PC-3 (cell line): ENCODE measurements at regions of chr6 and their contacts with region 1.

Region 1: DNA sequence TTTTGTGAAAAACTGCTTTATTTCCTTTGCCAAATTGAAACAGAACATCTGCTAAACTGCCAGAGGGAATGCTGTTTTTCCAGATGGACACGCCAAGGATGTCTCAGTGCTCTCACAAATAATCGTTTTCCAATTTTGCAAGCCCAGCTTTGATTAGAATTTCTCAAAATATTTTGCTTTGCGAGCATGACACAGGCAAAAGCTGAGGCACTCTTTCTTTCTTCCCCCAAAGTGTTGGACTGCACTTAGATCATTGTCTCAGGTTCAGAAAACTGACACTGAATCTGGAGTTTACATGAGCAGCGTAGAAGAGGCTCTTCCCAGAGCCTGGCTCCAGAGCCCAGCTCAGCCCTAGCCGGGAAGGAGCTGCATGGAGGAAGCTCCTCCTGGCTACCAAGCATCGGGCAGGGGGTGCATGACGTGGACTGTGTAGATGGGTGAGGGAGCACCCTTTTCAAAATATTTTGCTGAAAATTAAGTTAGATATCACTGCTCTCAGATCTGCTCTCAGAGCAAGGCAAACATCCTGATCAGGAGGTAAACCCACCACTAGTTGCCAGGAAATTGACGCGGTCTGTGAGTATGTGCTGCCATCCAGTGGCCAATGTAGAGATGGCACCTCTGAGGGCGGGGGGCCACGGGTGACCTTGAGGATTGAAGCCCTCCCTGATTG is 107.5 kb downstream of the SLC22A3 start:
- DNase-seq: peak; percentile 64
- ATAC-seq: peak; percentile 78
- H3K4me3 ChIP-seq: no peak overlapping the region
- H3K27ac ChIP-seq: no peak overlapping the region
- H3K4me1 ChIP-seq: peaks cover 15% of the 10 kb centered on the region
- H3K27me3 ChIP-seq: no peaks in the 10 kb centered on the region
- CTCF ChIP-seq: peak; percentile 91

Region 2: GRCh38 chr6:160221423-160221822 is 234.3 kb before region 1 on chr6:
- CTCF ChIA-PET with region 1: interaction called, 13 read pairs
- POLR2A ChIA-PET with region 1: no interaction called
- intact Hi-C with region 1: loop called (anchors 5 kb)
- DNase-seq: peak; percentile 22
- ATAC-seq: no peak
- H3K4me3 ChIP-seq: no peak overlapping the region
- H3K27ac ChIP-seq: no peak overlapping the region
- H3K4me1 ChIP-seq: no peaks in the 10 kb centered on the region
- H3K27me3 ChIP-seq: no peaks in the 10 kb centered on the region
- CTCF ChIP-seq: peak; percentile 33; the same call in 1 of the 2 replicates

Region 3: GRCh38 chr6:160355001-160355400 is 100.7 kb before region 1 on chr6:
- CTCF ChIA-PET with region 1: no interaction called
- POLR2A ChIA-PET with region 1: no interaction called
- intact Hi-C with region 1: no loop called
- DNase-seq: peak; percentile 78
- ATAC-seq: peak; percentile 97
- H3K4me3 ChIP-seq: no peak overlapping the region
- H3K27ac ChIP-seq: peak overlapping the region; percentile 55
- H3K4me1 ChIP-seq: peaks cover 5% of the 10 kb centered on the region
- H3K27me3 ChIP-seq: no peaks in the 10 kb centered on the region
- CTCF ChIP-seq: no peak

Region 4: DNA sequence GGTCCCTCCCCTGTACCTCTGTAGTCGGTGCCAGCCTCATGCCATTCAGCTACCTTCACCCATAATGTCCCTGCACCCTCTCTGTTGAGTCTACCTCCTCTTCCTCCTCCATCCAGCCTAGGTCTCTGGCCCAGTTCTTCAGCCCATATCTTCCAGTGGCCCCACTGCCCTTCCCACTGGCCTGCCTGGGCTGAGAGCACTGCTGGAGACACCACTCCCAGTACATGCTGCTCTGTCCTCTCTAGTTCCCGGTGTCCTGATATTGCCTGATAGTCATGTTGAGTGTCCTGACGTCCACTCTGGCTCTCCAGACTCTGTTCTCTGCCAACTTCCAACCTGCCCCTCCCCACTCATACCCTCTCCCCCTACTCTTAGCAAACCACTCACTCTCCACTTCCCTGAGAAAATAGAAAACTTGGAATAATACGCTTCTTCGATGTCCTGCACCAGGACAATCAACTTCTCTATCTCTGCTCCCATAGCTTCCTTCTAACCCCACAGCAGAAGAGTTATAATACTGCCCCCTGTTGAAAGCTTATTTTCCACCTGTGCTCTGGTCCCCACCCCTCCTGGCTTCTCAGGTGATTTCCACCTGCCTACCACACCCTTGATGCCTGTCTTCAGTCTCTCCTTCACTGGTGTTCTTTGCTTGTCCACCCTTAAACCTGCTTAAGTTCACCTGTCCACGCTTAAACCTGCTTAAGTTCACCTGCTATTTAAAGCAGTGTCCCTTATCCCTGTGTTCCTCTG is 87.7 kb before region 1 on chr6:
- CTCF ChIA-PET with region 1: no interaction called
- POLR2A ChIA-PET with region 1: no interaction called
- intact Hi-C with region 1: no loop called
- DNase-seq: no peak
- ATAC-seq: no peak
- H3K4me3 ChIP-seq: no peak overlapping the region
- H3K27ac ChIP-seq: no peak overlapping the region
- H3K4me1 ChIP-seq: peaks cover 10% of the 10 kb centered on the region
- H3K27me3 ChIP-seq: no peaks in the 10 kb centered on the region
- CTCF ChIP-seq: 0 out of 2 replicates have a peak, but pooled peaks have one; percentile 13

Region 5: DNA sequence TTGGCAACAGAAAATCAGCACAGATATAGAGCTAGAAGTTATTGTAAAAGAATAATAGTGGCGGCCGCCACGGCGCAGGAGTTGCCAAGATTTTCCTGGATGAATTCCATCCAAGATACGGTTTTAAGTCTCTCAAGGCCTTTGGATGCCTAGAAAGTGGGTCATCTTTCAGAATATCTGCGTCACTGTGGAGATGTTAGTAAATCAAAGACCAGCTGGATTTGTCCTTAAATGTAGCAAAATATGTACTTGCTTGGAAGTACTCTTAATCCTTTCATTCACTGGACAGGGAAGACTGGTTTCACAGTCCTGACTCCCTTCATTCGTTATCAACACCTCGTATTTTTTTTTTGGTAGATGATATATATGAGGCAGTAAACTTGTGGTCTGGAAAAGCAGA is 24.5 kb before region 1 on chr6:
- CTCF ChIA-PET with region 1: no interaction called
- POLR2A ChIA-PET with region 1: no interaction called
- intact Hi-C with region 1: no loop called
- DNase-seq: no peak
- ATAC-seq: no peak
- H3K4me3 ChIP-seq: no peak overlapping the region
- H3K27ac ChIP-seq: no peak overlapping the region
- H3K4me1 ChIP-seq: peaks cover 5% of the 10 kb centered on the region; the same call in 1 of the 2 replicates
- H3K27me3 ChIP-seq: no peaks in the 10 kb centered on the region
- CTCF ChIP-seq: no peak

Region 6: GRCh38 chr6:160534050-160534696 is 78.5 kb after region 1 on chr6:
- CTCF ChIA-PET with region 1: no interaction called
- POLR2A ChIA-PET with region 1: no interaction called
- intact Hi-C with region 1: loop called (anchors 1 kb)
- DNase-seq: peak; percentile 70
- ATAC-seq: peak; percentile 82
- H3K4me3 ChIP-seq: peak overlapping the region; percentile 68
- H3K27ac ChIP-seq: no peak overlapping the region
- H3K4me1 ChIP-seq: no peaks in the 10 kb centered on the region; the same call in 1 of the 2 replicates
- H3K27me3 ChIP-seq: 0 out of 2 replicates have a peak, but pooled peaks cover 4% of the 10 kb centered on the region
- CTCF ChIP-seq: peak; percentile 93